Activated CD8-positive, alpha-beta T cell treated with anti-CD3 and anti-CD28 coated beads for 36 hours (primary cell): ENCODE measurements at regions of chr14 and their contacts with region 1.

Region 1: DNA sequence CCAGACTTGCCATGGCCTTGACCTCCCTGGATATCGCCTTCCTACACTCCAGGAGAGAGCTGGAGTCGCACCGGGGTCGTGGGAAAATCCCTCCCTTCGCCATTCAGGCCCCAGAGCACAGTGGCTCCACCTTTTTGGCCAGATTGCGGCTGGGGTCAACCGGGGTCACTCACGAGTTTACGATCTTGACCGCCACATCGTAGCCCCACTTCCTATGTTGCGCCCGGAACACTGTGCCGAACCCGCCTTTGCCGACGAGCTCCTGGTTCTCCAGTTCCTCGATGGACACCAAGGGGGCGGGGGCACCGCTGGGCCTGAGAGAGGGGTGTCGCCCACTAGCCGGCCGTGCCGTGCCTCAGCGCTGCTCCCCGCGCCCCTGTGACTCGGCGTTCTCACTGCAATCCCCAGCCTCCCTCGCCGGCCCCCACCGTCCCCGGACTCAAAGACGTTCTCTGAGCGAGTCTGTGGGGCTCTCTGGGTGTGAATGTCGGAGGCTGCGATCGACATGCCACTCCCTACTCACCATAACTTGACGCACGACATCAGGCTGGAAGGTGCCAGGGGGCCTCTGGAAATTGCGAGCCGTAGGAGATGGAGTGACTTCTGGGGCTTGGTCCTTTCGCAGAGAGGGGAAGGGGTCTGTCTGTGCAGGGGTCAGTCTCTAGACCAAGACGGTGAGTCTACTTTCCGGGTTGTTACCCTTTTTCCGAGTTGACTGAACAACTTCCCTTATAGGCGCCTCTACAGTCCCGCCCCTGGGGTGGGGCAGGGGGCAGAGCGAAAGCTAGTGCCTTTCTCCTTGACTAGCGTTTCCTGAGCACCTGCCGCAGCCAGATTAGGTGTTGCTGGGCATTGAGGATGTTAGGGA is at the start of gene RIPK3:
- DNase-seq: peak; percentile 81
- ATAC-seq: peak; percentile 94
- H3K4me3 Mint-ChIP-seq: peak within 1 kb of the TSS; percentile 85
- H3K27ac Mint-ChIP-seq: peak within 1 kb of the TSS; percentile 74
- H3K4me1 Mint-ChIP-seq: peaks cover 18% of the 10 kb centered on the region
- H3K27me3 Mint-ChIP-seq: peaks cover 12% of the 10 kb centered on the region
- CTCF ChIP-seq: no peak
- total RNA-seq, gene RIPK3: 5.9 to 6.5 TPM

Region 2: GRCh38 chr14:24372701-24373416 is 33.3 kb after region 1 on chr14:
- CTCF ChIA-PET with region 1: interaction called, 30 read pairs
- POLR2A ChIA-PET with region 1: no interaction called
- intact Hi-C with region 1: loop called (anchors 5 kb)
- DNase-seq: no peak
- ATAC-seq: no peak
- H3K4me3 Mint-ChIP-seq: no peak overlapping the region
- H3K27ac Mint-ChIP-seq: no peak overlapping the region
- H3K4me1 Mint-ChIP-seq: peaks cover 6% of the 10 kb centered on the region
- H3K27me3 Mint-ChIP-seq: peaks cover 6% of the 10 kb centered on the region
- CTCF ChIP-seq: no peak